IMR-90 (cell line): ENCODE measurements at regions of chr3 and their contacts with region 1.

Region 1: DNA sequence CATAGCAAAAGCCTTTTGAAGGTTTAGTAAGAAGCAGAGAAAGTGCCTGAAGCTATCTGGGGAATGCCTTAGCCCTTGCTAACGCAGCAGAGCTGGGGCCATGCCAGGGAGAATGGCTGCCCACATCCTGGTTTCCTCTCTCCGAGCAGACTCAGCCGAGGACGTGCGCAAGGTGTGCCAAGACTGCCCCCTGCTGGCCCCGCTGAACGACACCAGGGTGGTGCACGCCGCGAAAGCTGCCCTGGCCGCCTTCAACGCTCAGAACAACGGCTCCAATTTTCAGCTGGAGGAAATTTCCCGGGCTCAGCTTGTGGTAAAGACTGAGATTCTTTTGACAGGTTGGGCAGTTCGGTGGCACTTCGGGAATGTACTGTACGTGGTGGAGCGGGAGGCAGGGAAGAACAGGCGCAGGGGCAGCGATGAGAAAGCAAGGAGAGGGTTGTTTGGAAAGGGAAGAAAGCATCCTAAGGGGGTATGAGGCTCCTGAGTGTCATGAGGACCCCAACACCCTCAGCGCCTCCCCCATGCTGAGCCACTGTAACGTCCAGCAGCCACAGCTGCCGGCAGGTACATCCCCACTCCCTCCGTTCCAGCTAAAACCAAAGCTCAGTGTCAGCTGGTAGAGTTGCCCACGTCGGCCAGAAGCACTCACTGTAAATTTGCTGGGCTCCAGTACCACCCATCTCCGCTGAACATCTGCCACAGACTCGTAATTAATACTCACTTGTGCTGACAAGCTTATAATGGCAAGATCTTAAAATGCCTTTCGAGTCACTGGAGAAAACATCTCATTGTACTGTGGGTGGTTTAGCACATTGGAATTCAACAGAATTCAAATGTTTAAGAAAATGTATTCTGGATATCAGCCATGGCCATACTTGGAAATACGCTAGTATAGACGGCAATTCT is 4.4 kb downstream of the AHSG start:
- DNase-seq: peak; percentile 96
- ATAC-seq: peak; percentile 99
- H3K4me3 ChIP-seq: peak overlapping the region; percentile 10; the same call in 1 of the 2 replicates
- H3K27ac ChIP-seq: no peak overlapping the region
- H3K4me1 ChIP-seq: no peaks in the 10 kb centered on the region
- H3K27me3 ChIP-seq: peaks cover 14% of the 10 kb centered on the region
- CTCF ChIP-seq: peak; percentile 96
- POLR2A ChIP-seq: no peak
- RAD21 ChIP-seq: peak; percentile 74

Region 2: DNA sequence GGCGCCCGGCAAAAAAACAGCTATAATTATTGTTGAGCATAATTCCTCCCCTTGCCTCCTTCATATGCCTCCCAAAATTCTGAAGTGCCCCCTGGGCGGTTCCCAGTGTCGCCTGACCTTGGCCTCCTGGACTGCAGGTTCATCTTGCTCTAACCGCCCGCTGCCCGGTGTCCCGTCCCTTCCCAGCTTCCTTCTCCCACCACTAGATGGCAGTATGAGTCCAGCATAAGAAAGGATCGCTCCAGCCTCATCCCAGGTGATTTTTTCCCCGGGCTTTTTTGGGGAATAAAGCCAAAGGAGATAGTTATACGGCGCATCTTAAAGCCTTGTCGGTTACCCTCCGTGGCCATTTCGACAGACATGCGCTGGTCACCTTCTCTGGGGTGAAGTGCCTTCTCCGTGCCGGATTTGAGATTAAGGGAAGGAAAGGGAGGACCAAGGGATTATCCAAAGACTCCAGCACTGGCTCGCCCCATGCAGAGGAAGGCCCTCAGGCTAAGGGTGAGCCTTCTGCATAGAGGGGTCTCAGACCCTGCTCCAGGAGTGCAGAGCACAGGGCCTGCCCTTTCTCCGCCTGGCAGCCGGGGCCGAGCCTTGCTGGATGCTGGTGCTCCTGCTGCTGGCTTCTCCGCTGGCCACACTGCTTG is 633.7 kb before region 1 on chr3:
- CTCF ChIA-PET with region 1: no interaction called
- POLR2A ChIA-PET with region 1: no interaction called
- dilution Hi-C with region 1: no loop called
- in situ Hi-C with region 1: no loop called
- intact Hi-C with region 1: loop called (anchors 5 kb)
- DNase-seq: peak; percentile 62
- ATAC-seq: peak; percentile 93
- H3K4me3 ChIP-seq: no peak overlapping the region
- H3K27ac ChIP-seq: no peak overlapping the region
- H3K4me1 ChIP-seq: 0 out of 2 replicates have a peak, but pooled peaks cover 2% of the 10 kb centered on the region
- H3K27me3 ChIP-seq: no peaks in the 10 kb centered on the region; the same call in 1 of the 2 replicates
- CTCF ChIP-seq: peak; percentile 91
- POLR2A ChIP-seq: no peak
- RAD21 ChIP-seq: peak; percentile 97

Region 3: DNA sequence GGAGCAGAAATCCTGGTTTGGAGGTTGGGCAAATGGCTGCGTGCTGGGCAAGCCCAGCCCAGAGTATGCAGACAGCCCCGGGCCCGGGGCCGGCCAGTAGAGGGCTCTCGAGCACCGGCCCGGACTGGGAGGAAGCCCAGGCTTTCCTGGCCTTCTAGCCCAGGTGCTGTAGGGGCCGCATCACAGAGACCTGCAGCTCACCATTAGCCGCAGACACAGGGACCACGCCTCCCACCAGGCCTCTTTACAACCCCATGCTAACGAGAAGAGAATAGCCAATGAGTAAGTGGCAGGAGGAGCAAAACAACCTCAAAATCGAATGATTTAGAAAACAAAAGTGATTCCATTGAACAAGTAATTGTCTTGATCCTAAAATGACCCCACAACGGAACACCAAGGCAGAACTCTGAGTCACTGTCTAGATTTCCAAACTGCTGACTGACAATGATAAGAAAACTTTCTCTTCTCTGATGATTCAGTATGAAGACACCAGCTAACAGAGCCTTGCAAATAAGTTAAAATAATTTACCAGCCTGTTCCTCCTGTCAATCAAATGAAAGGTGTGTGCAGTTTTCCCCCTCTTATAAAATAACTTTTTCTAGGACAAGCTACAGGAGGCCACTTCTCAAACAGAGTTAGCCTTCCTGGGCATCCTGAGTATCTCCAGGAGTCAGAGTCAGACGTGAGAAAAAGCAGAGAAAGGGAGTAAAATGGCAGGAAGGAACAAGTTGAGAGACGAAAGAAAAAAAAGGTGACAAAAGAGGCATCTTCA is 357.5 kb before region 1 on chr3:
- CTCF ChIA-PET with region 1: no interaction called
- POLR2A ChIA-PET with region 1: no interaction called
- dilution Hi-C with region 1: no loop called
- in situ Hi-C with region 1: no loop called
- intact Hi-C with region 1: loop called (anchors 5 kb)
- DNase-seq: peak; percentile 73
- ATAC-seq: peak; percentile 99
- H3K4me3 ChIP-seq: peak overlapping the region; percentile 6; the same call in 1 of the 2 replicates
- H3K27ac ChIP-seq: no peak overlapping the region
- H3K4me1 ChIP-seq: no peaks in the 10 kb centered on the region
- H3K27me3 ChIP-seq: peaks cover 14% of the 10 kb centered on the region
- CTCF ChIP-seq: peak; percentile 79
- POLR2A ChIP-seq: no peak
- RAD21 ChIP-seq: peak; percentile 74

Region 4: DNA sequence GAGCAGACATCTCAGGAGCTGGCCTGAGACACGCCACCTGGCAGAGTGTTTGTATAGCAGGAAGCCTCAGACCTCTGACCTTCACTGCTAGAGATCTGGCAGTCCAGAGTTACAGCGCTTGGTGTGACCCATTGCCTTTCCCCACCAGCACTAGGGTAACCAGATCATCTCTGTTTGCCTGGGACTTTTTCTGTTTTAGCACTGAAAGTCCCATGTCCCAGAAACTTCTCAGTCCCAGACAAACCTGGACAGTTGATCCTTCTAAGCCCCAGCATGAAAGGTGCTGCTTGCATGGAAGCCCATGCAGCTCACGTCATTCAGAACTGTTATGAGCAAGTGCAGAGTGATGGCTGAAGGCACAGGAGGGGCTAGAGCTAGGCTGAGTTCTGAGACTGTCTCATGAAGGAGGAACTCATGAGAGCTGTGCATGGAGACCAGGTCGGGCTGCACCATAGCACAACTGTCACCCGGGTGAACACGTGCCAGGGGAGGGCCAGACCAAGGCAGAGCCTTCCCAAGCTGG is 22.6 kb before region 1 on chr3:
- CTCF ChIA-PET with region 1: interaction called, 12 read pairs
- POLR2A ChIA-PET with region 1: no interaction called
- dilution Hi-C with region 1: no loop called
- in situ Hi-C with region 1: no loop called
- intact Hi-C with region 1: no loop called
- DNase-seq: no peak
- ATAC-seq: no peak; the same call in 1 of the 2 replicates
- H3K4me3 ChIP-seq: no peak overlapping the region
- H3K27ac ChIP-seq: no peak overlapping the region
- H3K4me1 ChIP-seq: no peaks in the 10 kb centered on the region
- H3K27me3 ChIP-seq: peaks cover 3% of the 10 kb centered on the region; the same call in 1 of the 2 replicates
- CTCF ChIP-seq: no peak
- POLR2A ChIP-seq: no peak
- RAD21 ChIP-seq: no peak

Region 5: DNA sequence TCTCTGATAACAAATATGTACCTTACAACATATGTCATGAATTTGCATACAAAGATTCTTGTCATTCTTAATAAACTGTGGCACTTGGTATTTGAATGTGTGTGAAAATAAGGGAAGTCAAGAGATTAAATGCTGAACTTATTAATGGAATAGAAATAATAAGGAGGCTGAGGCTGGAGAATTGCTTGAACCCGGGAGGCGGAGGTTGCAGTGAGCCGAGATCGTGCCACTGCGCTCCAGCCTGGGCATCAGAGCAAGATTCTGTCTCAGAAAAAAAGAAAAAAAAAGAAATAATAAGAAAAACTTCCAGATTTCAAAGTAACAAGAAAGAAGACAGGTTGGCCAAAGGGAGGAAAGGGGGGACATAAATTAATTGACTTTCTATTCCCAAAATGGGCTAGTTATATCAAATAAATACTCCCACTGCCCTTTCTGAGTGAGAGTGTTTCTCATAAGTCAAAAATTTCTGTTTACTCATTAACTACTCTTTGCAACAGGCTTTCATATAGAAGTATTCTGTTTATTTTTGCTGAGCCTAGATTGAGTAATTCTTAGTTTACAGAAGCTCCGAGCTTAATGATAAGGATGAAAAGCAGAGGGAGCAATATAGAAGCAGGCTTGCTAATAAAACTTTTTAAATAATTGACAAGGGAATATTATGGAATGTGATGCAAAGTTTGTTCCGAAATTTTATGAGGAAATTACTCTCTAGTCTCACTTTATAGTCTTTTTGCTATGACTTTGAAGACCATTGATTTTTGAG is 125.5 kb after region 1 on chr3:
- CTCF ChIA-PET with region 1: no interaction called
- POLR2A ChIA-PET with region 1: no interaction called
- dilution Hi-C with region 1: no loop called
- in situ Hi-C with region 1: no loop called
- intact Hi-C with region 1: no loop called
- DNase-seq: peak; percentile 23
- ATAC-seq: peak; percentile 65
- H3K4me3 ChIP-seq: no peak overlapping the region
- H3K27ac ChIP-seq: no peak overlapping the region
- H3K4me1 ChIP-seq: peaks cover 3% of the 10 kb centered on the region; the same call in 1 of the 2 replicates
- H3K27me3 ChIP-seq: no peaks in the 10 kb centered on the region; the same call in 1 of the 2 replicates
- CTCF ChIP-seq: no peak
- POLR2A ChIP-seq: no peak
- RAD21 ChIP-seq: no peak

Region 6: DNA sequence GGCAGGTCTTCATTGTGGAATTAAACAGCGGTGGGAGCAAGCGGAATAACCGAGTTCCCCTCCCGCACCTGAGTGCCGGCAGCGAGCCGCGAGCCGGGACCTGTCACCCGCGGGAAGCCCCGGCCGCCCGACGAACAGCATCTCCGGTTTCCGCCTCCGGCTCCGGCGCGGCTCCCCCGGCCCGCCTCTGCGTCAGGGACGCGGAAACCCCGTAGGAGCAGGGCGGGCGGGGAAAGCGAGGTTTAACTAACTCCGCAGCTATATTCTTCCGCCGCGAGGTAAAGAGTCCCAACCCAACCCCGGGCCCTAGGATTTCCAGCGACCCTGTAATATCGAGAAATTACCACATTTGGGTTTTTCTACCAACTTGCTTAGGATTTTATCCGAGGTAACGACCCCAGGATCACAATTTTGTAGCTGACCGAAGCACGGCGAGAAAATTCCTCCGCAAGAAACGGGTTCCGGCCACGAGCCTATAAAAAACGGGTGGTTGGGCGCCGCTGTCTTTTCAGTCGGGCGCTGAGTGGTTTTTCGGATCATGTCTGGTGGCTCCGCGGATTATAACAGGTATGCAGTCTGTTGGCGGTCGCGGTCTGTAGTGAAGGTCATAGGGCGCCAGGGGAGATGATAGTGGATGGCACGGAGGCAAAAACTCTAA is 165.9 kb after region 1 on chr3 and contains the start of gene EIF4A2:
- CTCF ChIA-PET with region 1: interaction called, 4 read pairs
- POLR2A ChIA-PET with region 1: interaction called, 4 read pairs
- dilution Hi-C with region 1: no loop called
- in situ Hi-C with region 1: no loop called
- intact Hi-C with region 1: loop called (anchors 1 kb)
- DNase-seq: peak; percentile 86
- ATAC-seq: peak; percentile 84
- H3K4me3 ChIP-seq: peak within 1 kb of the TSS; percentile 80
- H3K27ac ChIP-seq: peak within 1 kb of the TSS; percentile 93
- H3K4me1 ChIP-seq: no peaks in the 10 kb centered on the region; the same call in 1 of the 2 replicates
- H3K27me3 ChIP-seq: no peaks in the 10 kb centered on the region
- CTCF ChIP-seq: no peak
- POLR2A ChIP-seq: peak; percentile 100
- RAD21 ChIP-seq: no peak
- total RNA-seq, gene EIF4A2: 310 and 449 TPM in 2 replicates

Region 7: GRCh38 chr3:186821429-186822367 is 204.4 kb after region 1 on chr3:
- CTCF ChIA-PET with region 1: interaction called, 28 read pairs
- POLR2A ChIA-PET with region 1: no interaction called
- dilution Hi-C with region 1: no loop called
- in situ Hi-C with region 1: loop called (anchors 5 kb)
- intact Hi-C with region 1: loop called (anchors 1 kb)
- DNase-seq: peak; percentile 83
- ATAC-seq: peak; percentile 69
- H3K4me3 ChIP-seq: peak overlapping the region; percentile 35; the same call in 1 of the 2 replicates
- H3K27ac ChIP-seq: peak overlapping the region; percentile 98
- H3K4me1 ChIP-seq: peaks cover 14% of the 10 kb centered on the region
- H3K27me3 ChIP-seq: no peaks in the 10 kb centered on the region
- CTCF ChIP-seq: peak; percentile 77
- POLR2A ChIP-seq: no peak
- RAD21 ChIP-seq: peak; percentile 73

Region 8: DNA sequence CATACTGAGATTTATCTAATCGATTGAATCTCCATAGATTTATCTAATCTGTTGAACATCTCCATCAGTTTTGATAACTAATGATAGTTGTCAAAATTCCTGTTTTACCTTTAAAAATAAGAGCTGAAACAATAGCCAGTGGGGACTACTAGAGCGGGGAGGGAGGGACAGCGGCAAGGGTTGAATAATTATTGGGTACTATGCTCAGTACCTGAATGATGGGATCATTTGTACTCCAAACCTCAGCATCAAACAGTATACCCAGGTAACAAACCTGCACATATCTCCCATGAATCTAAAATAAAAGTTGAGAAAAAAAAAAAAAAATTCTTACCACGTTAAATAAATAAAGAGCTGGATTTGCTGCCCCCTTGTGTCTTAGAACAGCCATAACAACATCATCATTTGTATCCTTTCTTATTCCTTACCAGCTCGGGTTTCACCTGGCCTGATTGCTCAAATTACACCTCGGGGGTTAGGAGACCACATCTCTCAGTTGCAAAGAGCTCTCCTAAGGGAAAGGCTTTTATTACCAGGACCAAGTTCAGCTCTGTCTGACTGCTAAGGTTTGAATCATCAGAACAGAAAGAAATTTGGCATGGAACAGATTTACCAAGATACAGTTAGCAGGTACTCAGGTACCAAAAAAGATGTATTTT is 547.7 kb after region 1 on chr3:
- CTCF ChIA-PET with region 1: interaction called, 7 read pairs
- POLR2A ChIA-PET with region 1: no interaction called
- dilution Hi-C with region 1: no loop called
- in situ Hi-C with region 1: no loop called
- intact Hi-C with region 1: loop called (anchors 5 kb)
- DNase-seq: peak; percentile 55
- ATAC-seq: peak; percentile 71
- H3K4me3 ChIP-seq: no peak overlapping the region
- H3K27ac ChIP-seq: no peak overlapping the region
- H3K4me1 ChIP-seq: peaks cover 2% of the 10 kb centered on the region; the same call in 1 of the 2 replicates
- H3K27me3 ChIP-seq: peaks cover 24% of the 10 kb centered on the region
- CTCF ChIP-seq: peak; percentile 69
- POLR2A ChIP-seq: no peak
- RAD21 ChIP-seq: peak; percentile 61